HEK293T (cell line): ENCODE measurements at regions of chr2 and their contacts with region 1.

Region 1: GRCh38 chr2:20446917-20447436 is at the start of gene RHOB:
- DNase-seq: peak; percentile 98

Region 2: GRCh38 chr2:20350753-20351554 is 96.0 kb before region 1 on chr2 and contains the start of gene PUM2:
- CTCF ChIA-PET with region 1: no interaction called
- POLR2A ChIA-PET with region 1: interaction called, 13 read pairs
- DNase-seq: peak; percentile 95

Region 3: DNA sequence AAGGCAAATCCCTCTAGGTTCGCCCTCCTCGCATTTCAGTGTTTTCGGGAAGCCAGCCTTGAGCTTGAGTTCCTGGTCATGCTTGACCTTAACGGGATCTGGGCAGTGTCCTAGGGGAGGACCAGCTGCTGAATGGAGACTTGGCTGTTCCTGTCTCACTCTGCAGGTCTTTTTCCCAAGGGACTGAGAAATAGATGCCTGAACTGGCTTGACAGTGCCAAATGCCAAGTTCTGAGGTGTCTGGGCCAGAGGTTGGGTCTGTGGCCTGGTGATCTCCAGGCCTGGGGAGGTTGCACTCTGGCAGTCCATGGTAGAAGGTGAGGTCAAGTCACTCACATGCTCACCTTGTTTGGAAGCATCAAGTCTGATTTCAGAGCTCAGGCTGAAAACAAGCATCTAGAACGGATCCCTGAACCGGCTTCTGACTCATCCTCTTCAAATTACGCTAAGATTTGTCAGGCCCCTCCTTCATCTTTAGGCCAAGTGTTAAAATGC is 19.5 kb after region 1 on chr2:
- CTCF ChIA-PET with region 1: no interaction called
- POLR2A ChIA-PET with region 1: interaction called, 15 read pairs
- DNase-seq: no peak

Region 4: DNA sequence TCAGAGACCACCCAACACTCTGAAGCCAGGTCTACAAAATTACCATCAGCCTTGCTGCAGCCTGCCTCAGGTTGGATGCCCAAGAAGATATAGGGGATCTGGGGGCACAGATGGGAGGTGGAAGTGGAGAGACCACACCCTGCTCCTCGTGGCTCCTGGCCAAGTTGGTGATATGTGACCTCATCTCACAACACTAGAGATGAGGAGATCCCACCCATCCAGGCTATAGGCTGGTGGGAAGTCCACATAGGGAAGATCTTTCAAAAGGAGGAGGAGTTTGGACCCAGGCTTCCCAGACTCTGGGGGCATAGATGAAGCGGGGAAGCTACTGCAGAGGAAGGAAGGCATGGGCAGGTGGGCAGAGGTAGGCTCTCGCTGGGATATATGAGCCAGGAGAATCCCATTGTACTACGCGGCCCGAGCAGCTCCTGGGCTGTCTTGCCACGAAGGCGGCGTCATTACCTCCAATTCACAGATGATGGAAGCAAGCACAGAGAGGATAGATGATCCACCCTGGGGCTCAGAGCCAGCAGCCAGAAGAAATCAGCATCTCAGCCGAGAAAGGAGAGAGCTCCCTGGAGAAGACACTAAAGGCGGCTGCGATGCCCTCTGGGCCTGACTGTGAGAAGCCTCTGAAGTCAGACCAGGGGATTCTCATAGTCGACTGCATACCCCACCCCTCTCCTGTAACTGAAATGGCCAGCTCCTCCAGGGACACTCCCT is 95.9 kb after region 1 on chr2:
- CTCF ChIA-PET with region 1: interaction called, 3 read pairs
- POLR2A ChIA-PET with region 1: interaction called, 18 read pairs
- DNase-seq: no peak

Region 5: DNA sequence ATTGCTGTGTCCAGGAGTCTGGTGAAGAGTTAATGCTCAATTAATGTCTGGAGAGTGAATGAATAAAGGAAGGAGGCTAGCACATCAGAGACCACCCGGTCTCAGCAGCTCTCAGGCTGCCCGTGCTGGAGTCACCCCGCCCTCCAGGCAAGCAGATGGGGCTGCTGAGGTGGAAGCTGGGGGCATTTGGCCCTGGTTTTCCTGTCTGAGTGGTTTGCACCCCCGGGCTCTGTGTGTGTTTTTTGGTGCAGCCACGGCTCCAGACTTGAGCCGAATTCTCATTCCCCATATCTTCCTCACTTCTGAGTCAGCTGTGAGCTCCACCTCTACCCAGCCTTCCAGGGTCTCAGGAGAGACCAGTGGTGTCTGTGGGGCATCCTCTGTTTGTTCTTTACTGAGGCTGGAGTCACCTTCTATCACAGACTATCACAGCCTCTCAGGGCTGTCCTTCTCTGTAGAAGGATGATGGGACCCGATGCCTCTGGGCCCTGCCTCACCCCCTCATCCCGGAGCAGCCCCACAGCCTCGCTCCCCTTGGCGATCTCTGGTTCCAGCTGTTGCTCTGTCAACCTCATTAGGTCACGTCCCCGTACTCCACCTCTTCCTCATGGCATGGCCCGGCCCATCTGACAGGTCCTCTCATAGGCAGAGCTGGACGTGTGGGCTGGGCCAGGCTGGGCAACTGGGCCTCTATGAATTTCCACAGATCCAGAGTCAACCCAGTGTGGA is 143.2 kb after region 1 on chr2:
- CTCF ChIA-PET with region 1: no interaction called
- POLR2A ChIA-PET with region 1: interaction called, 77 read pairs
- DNase-seq: no peak

Region 6: DNA sequence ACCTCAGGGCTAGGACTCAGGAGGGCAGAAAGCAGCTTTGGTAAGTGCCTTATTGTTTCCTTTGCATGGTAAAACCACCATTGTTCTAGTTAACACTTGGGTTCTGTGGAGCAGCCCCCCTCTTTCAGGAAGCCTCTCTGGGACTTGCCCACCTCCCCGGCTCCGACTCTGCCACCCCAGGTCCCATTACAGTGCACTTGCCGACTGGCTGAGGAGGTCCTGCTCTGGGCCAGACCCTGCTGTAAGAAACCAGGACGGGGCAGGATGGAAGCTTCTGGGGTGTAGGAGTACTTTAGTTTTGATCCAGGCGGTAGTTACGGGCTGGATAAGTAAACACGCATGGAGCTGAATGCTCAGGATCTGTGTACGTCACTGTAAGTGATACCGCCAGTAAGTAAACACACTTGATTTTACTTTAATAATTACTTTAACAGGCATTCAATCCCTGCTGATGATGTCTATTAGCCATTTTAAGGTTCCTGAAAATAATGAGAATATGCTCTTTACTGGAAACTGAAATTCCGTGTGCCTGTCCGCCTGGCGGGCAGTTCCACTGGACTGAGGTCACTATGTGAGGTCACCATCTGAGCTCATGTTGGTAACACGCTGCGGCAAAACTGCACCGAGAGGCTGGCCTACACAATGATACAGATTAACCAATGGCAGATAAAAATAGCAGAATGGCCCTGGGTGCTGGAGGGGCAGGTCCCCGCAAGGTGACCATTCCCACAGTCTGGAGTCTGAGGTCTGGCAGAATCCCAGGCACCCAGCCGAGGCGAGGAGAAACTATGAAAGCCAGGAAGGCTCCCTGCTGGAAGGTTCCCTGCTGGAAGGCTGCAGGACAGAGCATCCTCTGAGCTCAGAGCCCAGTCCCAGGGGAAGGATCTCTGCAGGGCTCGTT is 178.8 kb after region 1 on chr2:
- CTCF ChIA-PET with region 1: no interaction called
- POLR2A ChIA-PET with region 1: interaction called, 81 read pairs
- DNase-seq: no peak